Posterior cingulate gyrus (tissue), 11 donors: ENCODE measurements at regions of chr18 and their contacts with region 1.

Region 1: GRCh38 chr18:54671291-54671881 is 80.3 kb downstream of the DYNAP start:
- DNase-seq: no peak

Region 2: GRCh38 chr18:54181856-54182602 is 489.4 kb before region 1 on chr18:
- intact Hi-C with region 1: no loop called
- DNase-seq: no peak

Region 3: DNA sequence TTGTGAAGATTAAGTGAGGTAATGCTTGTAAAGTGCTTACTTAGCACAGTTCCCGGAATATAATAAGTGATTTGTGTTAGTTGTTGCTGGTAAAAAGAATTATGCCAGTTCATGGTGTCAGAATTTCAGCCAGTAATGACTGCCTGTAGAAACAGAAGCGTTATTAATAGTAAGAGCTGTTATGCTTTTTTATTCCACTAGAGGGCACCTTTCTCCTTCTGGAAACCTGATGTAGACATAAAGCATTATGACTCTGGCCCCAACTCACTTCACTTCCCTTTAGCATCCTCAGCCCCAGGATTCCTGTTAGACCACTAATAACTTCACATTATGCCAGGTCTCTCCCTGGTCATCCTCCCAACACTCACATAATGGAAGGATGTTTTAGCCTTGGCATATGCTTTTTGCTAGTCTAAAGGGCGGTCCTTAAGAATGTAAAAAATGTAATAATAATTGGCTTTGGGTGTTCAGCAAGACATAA is 278.8 kb before region 1 on chr18:
- intact Hi-C with region 1: loop called (anchors 2 kb)
- DNase-seq: no peak

Region 4: GRCh38 chr18:54444319-54444914 is 227.0 kb before region 1 on chr18:
- intact Hi-C with region 1: loop called (anchors 2 kb)
- DNase-seq: peak in 8 of 10 donors; percentile 31 to 87 (median 49)